Lower leg skin (tissue), 4 donors: ENCODE measurements at regions of chr13 and their contacts with region 1.

Region 1: GRCh38 chr13:101144808-101145419 is 271.4 kb downstream of the NALCN start:
- DNase-seq: no peak
- H3K4me3 ChIP-seq: no peak overlapping the region
- CTCF ChIP-seq: no peak
- POLR2A ChIP-seq: no peak

Region 2: DNA sequence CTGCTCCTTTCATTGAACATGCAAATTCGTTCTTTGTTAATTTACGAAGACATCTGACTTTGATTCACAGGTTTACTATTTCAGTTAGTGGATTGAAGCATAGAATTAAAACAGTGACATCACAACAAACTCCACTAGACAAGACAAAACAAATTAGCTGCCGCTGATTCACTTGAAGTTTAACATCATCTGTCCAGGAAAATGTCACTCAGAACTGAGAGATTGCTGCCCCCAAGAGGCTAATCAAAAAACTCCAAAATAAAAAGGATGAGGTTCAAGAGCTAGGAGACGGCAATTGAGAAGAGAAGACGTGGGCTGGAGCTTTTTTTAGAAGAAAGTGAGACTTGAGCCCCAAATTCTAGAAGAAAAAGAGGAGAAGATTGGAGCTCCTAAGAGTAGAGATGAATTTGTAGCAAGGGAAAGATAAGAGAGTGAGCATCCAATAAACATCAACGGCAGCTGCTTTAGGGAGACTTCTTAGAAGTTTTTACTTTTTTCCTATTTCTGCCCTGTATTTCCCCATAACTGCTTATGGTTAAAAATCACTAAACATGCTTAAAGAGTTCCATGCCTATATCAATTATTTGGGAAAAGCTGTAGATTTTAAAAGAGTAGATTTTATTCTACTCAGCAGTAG is 1411.1 kb after region 1 on chr13:
- intact Hi-C with region 1: loop called (anchors 10 kb)
- DNase-seq: no peak
- H3K4me3 ChIP-seq: no peak overlapping the region
- CTCF ChIP-seq: no peak
- POLR2A ChIP-seq: no peak

Region 3: DNA sequence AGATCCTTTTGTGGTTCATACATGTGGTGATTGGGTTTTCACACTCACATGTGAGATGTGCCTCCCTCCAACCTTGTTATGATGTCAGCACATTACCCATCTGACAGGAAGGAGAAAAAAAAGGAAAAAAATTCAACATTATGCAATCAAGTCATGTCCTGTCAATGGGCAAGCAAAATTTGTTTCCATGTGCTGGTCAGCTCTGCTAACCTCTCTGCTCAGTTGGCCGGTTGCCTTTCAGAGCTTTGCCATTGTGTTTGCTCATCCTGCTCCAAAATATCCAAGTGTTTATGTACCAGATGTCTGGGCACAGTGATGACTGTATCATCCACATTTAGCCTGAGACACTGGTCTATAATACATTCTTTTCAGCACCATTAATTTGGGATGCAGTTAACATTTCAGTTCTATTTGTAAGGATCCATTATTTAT is 1576.9 kb after region 1 on chr13:
- intact Hi-C with region 1: no loop called
- DNase-seq: no peak
- H3K4me3 ChIP-seq: no peak overlapping the region
- CTCF ChIP-seq: no peak
- POLR2A ChIP-seq: no peak